Prostate gland (tissue), 2 donors: ENCODE measurements at regions of chr21 and their contacts with region 1.

Region 1: DNA sequence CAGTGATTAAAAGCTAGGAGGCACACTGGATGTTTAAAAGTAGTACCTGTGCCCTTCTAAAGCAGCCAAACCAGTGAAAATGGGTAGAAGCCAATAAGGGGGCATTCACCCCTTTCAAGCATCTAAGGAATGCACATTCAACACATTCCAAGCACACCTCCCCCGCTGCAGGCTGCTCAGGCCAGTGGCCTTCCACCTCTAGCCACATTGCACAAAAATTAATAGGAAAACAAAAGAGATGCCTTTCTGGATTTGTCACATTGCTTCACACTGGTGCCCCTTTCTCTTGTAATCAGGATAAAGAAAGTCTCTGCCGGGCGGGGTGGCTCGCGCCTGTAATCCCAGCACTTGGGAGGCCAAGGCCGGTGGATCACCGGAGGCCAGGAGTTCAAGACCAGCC is 834.0 kb downstream of the USP25 start:
- DNase-seq: no peak
- H3K4me3 ChIP-seq: no peak overlapping the region
- H3K27ac ChIP-seq: no peak overlapping the region
- H3K4me1 ChIP-seq: no peaks in the 10 kb centered on the region
- H3K27me3 ChIP-seq: no peaks in the 10 kb centered on the region
- CTCF ChIP-seq: no peak
- POLR2A ChIP-seq: no peak

Region 2: DNA sequence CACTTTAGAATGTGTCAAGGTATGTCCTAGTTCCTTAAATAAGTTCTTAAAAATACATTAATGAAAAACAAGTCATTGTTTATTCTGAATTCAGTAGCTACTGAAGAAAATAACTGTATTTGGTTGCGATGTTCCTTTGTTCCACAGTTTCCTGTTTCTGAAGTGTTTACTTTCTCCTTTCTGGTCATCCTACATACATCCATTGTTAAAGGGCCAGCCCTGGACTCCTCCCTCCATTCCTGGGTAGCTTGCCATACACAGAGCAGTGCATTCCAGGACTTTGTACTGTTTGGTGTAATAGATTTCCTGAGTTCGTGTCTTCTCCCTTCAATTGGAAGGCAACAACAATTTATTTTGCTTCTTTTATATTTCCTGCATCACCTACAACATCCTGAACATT is 103.6 kb after region 1 on chr21:
- intact Hi-C with region 1: no loop called
- DNase-seq: no peak
- H3K4me3 ChIP-seq: no peak overlapping the region
- H3K27ac ChIP-seq: no peak overlapping the region
- H3K4me1 ChIP-seq: no peaks in the 10 kb centered on the region
- H3K27me3 ChIP-seq: no peaks in the 10 kb centered on the region
- CTCF ChIP-seq: no peak
- POLR2A ChIP-seq: no peak

Region 3: GRCh38 chr21:16855164-16855667 is 291.4 kb after region 1 on chr21:
- intact Hi-C with region 1: no loop called
- DNase-seq: no peak
- H3K4me3 ChIP-seq: no peak overlapping the region
- H3K27ac ChIP-seq: no peak overlapping the region
- H3K4me1 ChIP-seq: no peaks in the 10 kb centered on the region
- H3K27me3 ChIP-seq: no peaks in the 10 kb centered on the region
- CTCF ChIP-seq: no peak
- POLR2A ChIP-seq: no peak

Region 4: DNA sequence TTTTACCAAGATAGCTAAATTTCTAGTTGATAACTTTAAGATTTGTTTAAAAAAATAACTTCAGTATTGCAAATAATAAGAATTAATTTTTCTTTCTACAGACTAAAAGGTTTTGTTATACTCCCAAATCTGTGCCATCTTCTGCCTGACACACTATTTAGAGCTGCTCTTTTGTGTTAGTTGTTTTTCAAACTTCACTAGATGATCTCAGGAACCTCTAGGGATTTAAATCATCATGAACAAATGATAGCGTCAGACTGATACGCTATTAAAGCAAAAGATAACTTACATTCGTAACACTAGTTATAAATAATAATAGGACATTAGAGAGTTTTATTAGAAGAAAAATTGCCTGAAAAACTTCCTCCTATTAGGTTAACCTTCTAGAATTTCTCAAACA is 706.0 kb after region 1 on chr21:
- intact Hi-C with region 1: loop called (anchors 10 kb)
- DNase-seq: no peak
- H3K4me3 ChIP-seq: no peak overlapping the region
- H3K27ac ChIP-seq: no peak overlapping the region
- H3K4me1 ChIP-seq: no peaks in the 10 kb centered on the region
- H3K27me3 ChIP-seq: no peaks in the 10 kb centered on the region
- CTCF ChIP-seq: no peak
- POLR2A ChIP-seq: no peak

Region 5: DNA sequence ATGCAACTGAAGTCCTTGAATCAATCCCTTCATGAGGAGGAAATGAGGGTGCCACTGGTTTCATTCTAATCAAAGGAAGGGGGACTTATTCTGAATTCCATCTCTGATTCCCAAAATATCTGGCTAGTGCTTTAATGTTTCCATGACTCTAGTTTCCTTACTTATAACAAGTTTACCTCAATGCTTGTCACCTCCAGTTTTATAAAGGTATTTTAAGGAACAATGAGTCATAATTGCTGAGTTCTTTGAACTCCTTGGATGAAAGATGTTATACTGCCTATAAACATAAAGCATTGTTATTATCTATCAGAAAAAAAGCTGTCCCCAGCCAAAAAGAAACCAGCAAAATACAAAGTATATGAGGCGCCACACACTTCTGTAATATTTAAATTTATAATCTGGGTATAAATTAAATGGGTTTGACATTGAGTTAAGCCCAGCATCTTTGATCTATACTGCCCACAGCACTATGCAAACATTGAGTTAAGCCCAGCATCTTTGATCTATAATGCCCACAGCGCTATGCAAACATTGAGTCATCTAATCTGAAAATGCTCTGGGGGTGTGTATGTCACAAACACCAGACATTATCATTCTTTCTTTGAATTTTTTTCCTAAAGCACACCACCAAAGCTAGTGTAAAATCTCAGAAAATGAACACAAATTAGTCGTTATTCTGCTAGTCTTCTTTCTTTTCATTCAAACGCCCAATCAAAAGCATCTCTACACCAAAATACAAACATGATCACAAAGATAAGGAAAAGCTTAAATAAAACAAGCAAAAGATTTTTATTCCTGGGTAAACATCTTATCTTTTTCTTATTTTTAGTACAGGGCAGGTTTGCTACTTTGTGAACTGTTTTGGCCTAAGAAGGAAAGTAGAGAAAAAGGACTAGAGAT is 937.6 kb after region 1 on chr21:
- intact Hi-C with region 1: no loop called
- DNase-seq: no peak
- H3K4me3 ChIP-seq: no peak overlapping the region
- H3K27ac ChIP-seq: no peak overlapping the region
- H3K4me1 ChIP-seq: no peaks in the 10 kb centered on the region
- H3K27me3 ChIP-seq: no peaks in the 10 kb centered on the region
- CTCF ChIP-seq: no peak
- POLR2A ChIP-seq: no peak